ENCODE measurements at regions of chr10 and their contacts with region 1.

Region 1: GRCh38 chr10:101840741-101841453 is 2.7 kb downstream of the KCNIP2 start:
- DNase-seq: peak; percentile 86
- ATAC-seq: peak; percentile 77
- H3K4me3 Mint-ChIP-seq: peak overlapping the region; percentile 73
- H3K27ac Mint-ChIP-seq: peak overlapping the region; percentile 64
- H3K4me1 Mint-ChIP-seq: peaks cover 35% of the 10 kb centered on the region
- H3K27me3 Mint-ChIP-seq: peaks cover 12% of the 10 kb centered on the region

Region 2: DNA sequence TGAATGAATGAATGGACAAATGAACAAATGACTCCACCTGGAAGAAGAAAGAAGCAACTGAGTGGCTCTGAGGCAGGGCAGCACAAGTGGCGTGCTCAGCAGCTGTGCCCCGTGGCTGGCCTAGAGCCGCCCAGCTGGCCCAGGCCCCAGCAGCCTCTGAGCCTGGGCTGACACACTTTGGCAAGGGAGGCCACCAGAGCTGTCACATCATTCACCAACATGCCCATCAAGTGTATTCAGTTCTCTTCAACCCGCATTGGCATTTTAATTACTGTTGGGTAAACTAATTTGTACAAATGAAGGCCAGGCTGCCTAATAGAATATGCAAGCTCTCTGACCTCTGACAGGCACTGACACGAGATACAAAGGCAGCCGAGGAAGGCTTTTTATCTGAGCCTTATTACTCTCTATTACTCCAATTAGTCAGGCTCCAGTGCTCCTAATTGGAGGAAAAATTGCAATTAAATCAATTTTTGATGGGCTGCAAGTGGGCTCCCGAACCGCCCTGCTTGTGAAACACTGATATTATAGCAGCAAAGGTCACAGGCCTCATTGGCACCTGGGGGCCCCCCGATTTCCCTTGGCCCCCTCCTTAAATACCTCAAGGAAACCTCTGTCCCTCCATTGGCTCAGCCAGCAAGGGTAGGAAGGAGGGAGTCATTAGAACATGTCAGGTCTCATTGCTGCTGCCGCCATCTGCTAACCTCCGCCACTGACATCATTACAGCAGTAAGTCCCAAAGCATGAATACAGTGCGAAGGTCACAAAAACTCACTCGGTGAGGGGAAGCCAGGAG is 210.9 kb before region 1 on chr10:
- CTCF ChIA-PET with region 1: no interaction called
- DNase-seq: no peak
- ATAC-seq: no peak
- H3K4me3 Mint-ChIP-seq: no peak overlapping the region
- H3K27ac Mint-ChIP-seq: no peak overlapping the region
- H3K4me1 Mint-ChIP-seq: no peaks in the 10 kb centered on the region
- H3K27me3 Mint-ChIP-seq: no peaks in the 10 kb centered on the region

Region 3: GRCh38 chr10:101797403-101798059 is 43.4 kb before region 1 on chr10:
- CTCF ChIA-PET with region 1: interaction called, 11 read pairs
- DNase-seq: no peak
- ATAC-seq: no peak
- H3K4me3 Mint-ChIP-seq: no peak overlapping the region
- H3K27ac Mint-ChIP-seq: no peak overlapping the region
- H3K4me1 Mint-ChIP-seq: peaks cover 3% of the 10 kb centered on the region
- H3K27me3 Mint-ChIP-seq: no peaks in the 10 kb centered on the region

Region 4: DNA sequence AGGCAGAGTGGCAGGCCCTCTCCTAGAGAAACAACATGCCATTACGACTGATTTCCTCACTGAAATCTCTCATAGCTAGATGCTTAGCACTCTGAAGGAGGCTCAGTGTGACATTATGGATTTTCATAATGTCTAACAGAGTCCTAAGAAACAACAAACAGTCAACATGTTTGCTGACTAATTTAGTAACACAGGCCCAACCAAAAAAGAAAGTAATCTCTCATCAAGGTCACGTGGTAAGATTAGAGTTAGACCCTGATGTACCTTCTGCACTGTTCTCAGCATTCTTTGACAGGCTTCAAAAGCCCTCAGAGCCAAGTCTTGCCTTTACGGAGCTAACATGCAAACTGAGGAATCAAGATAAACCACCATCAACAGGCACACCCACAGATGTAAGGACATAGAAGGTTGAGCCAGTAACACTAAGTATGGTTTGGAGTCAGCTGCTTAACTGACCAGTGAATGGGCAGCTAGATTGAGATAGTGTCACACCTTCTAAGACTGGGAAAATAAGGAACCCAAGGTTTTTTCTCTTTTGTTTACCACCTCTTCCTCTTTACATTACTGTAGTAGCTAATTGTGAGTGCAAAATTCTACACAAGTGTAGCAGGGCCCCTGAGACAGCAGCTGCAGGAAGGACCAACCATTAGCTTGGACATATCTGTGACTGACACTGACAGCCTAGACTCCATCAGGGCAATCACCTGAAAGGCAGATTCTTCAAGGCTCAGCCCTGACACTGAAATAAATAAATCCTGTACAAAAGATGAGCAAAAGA is 18.0 kb after region 1 on chr10:
- CTCF ChIA-PET with region 1: interaction called, 91 read pairs
- DNase-seq: no peak
- ATAC-seq: peak; percentile 93
- H3K4me3 Mint-ChIP-seq: no peak overlapping the region
- H3K27ac Mint-ChIP-seq: peak overlapping the region; percentile 60
- H3K4me1 Mint-ChIP-seq: peaks cover 24% of the 10 kb centered on the region
- H3K27me3 Mint-ChIP-seq: no peaks in the 10 kb centered on the region

Region 5: DNA sequence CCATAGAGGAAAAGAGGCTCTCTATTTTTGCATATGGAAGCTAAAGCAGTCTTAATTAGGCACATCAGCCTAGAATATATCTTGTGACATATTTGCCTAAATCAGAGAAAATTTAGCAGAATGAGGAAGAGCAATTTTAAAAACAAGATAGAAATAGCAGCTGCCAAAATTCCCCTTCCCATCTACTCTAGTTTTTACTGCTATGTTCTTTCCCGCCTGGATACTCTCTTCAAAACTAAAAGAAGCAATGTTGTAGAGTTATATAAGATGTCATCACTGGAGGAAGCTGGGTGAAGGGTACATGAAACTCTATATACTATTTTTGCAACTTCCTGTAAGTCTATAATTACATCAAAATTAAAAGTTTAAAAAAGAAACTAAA is 128.0 kb after region 1 on chr10:
- CTCF ChIA-PET with region 1: interaction called, 12 read pairs
- DNase-seq: no peak
- ATAC-seq: no peak
- H3K4me3 Mint-ChIP-seq: no peak overlapping the region
- H3K27ac Mint-ChIP-seq: no peak overlapping the region
- H3K4me1 Mint-ChIP-seq: peaks cover 26% of the 10 kb centered on the region
- H3K27me3 Mint-ChIP-seq: no peaks in the 10 kb centered on the region

Region 6: GRCh38 chr10:102009801-102010425 is 169.0 kb after region 1 on chr10:
- CTCF ChIA-PET with region 1: interaction called, 151 read pairs
- DNase-seq: peak; percentile 59
- ATAC-seq: peak; percentile 89
- H3K4me3 Mint-ChIP-seq: no peak overlapping the region
- H3K27ac Mint-ChIP-seq: no peak overlapping the region
- H3K4me1 Mint-ChIP-seq: no peaks in the 10 kb centered on the region
- H3K27me3 Mint-ChIP-seq: no peaks in the 10 kb centered on the region

Region 7: DNA sequence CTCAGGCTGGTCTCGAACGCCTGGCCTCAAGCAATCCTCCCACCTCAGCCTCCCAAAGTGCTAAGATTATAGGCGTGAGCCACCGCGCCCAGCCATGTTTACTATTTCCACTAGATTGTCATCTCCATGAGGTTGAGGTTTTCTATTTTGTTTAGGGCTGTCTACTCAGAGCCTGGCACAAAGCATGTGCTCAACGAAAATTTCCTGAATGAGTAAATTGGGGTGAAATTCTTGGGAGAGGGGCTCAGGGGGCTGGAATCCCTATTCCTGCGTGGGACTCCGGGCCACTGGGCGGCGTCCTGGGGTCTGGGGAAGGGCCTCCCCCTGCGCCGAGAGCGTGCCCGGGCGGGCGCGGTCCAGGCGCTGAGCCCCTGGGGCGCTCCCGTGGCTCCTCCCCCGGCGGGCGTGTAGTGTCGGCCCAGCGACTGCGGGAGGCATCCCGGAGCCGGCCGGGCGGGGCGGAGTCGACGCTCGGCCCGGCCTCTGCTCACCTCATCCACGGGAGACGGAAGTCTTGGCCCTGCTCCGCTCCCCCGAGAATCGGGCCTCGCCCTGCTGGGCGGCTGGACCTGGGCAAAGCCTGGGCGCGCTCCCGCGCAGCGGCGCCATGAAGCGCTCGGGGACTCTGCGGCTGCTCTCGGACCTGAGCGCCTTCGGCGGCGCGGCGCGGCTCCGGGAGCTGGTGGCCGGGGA is 224.1 kb after region 1 on chr10 and contains the start of gene HPS6:
- CTCF ChIA-PET with region 1: interaction called, 228 read pairs
- DNase-seq: peak; percentile 94
- ATAC-seq: peak; percentile 98
- H3K4me3 Mint-ChIP-seq: peak within 1 kb of the TSS; percentile 83
- H3K27ac Mint-ChIP-seq: peak within 1 kb of the TSS; percentile 86
- H3K4me1 Mint-ChIP-seq: peaks cover 19% of the 10 kb centered on the region
- H3K27me3 Mint-ChIP-seq: no peaks in the 10 kb centered on the region
- total RNA-seq, gene HPS6: 26.1 to 29.6 TPM

Measured in activated CD8-positive, alpha-beta memory T cell treated with anti-CD3 and anti-CD28 coated beads, Interleukin-2, amount 10 ng/mL, durations not matched to agents 7 days and 5 days (primary cell).